ENCODE measurements at regions of chr15 and their contacts with region 1.

Region 1: GRCh38 chr15:68550481-68551295 is 28.1 kb upstream of the CORO2B start:
- DNase-seq: peak; percentile 48
- ATAC-seq: peak; percentile 81
- H3K4me3 ChIP-seq: no peak overlapping the region
- H3K27ac ChIP-seq: no peak overlapping the region
- H3K4me1 ChIP-seq: no peaks in the 10 kb centered on the region
- H3K27me3 ChIP-seq: peaks cover 11% of the 10 kb centered on the region
- CTCF ChIP-seq: peak; percentile 83 to 90 (median 89)
- POLR2A ChIP-seq: no peak
- RAD21 ChIP-seq: peak; percentile 84

Region 2: GRCh38 chr15:68304589-68305337 is 245.9 kb before region 1 on chr15:
- CTCF ChIA-PET with region 1: interaction called, 38 read pairs
- POLR2A ChIA-PET with region 1: no interaction called
- RAD21 ChIA-PET with region 1: interaction called in 1 of 2 experiments, 3 read pairs
- intact Hi-C with region 1: loop called (anchors 2 kb)
- DNase-seq: no peak
- ATAC-seq: no peak
- H3K4me3 ChIP-seq: no peak overlapping the region
- H3K27ac ChIP-seq: no peak overlapping the region
- H3K4me1 ChIP-seq: peaks cover 0 to 33% of the 10 kb centered on the region in 2 experiments; a peak in 3 of 4 replicates
- H3K27me3 ChIP-seq: no peaks in the 10 kb centered on the region
- CTCF ChIP-seq: no peak
- POLR2A ChIP-seq: no peak
- RAD21 ChIP-seq: no peak

Region 3: DNA sequence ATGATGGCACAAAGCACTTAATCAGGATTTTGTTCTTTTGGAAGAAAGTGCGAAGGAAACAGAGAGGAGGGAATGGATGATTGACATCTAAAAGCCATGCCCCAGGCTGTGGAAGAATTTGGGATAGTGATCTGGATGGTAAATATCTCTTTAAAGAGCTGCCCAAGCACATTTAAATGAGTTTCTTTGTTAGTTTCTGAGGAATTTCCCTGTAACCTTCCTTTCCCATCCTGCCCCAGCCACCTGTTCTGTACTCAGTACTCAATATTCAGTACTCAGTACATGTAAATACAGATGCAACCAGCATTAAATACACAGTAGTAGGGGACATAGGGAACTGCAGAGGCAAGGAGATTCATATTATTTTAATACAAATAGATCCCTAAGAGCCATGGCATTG is 20.3 kb after region 1 on chr15:
- CTCF ChIA-PET with region 1: no interaction called
- POLR2A ChIA-PET with region 1: no interaction called
- RAD21 ChIA-PET with region 1: no interaction called
- intact Hi-C with region 1: no loop called
- DNase-seq: no peak
- ATAC-seq: no peak
- H3K4me3 ChIP-seq: no peak overlapping the region
- H3K27ac ChIP-seq: no peak overlapping the region
- H3K4me1 ChIP-seq: no peaks in the 10 kb centered on the region
- H3K27me3 ChIP-seq: no peaks in the 10 kb centered on the region
- CTCF ChIP-seq: no peak
- POLR2A ChIP-seq: no peak
- RAD21 ChIP-seq: no peak

Region 4: GRCh38 chr15:68672781-68673205 is 122.1 kb after region 1 on chr15:
- CTCF ChIA-PET with region 1: interaction called, 98 read pairs
- POLR2A ChIA-PET with region 1: no interaction called
- RAD21 ChIA-PET with region 1: interaction called, 23 to 28 read pairs
- intact Hi-C with region 1: loop called (anchors 1 kb)
- DNase-seq: no peak
- ATAC-seq: no peak
- H3K4me3 ChIP-seq: no peak overlapping the region
- H3K27ac ChIP-seq: no peak overlapping the region
- H3K4me1 ChIP-seq: peaks cover 0 to 18% of the 10 kb centered on the region in 2 experiments; a peak in 2 of 4 replicates
- H3K27me3 ChIP-seq: no peaks in the 10 kb centered on the region
- CTCF ChIP-seq: peak in 2 of 3 experiments; percentile 21 to 27; a peak in 2 of 6 replicates
- POLR2A ChIP-seq: no peak
- RAD21 ChIP-seq: peak; percentile 52

Region 5: GRCh38 chr15:68875377-68876116 is 324.9 kb after region 1 on chr15:
- CTCF ChIA-PET with region 1: interaction called, 45 read pairs
- POLR2A ChIA-PET with region 1: no interaction called
- RAD21 ChIA-PET with region 1: interaction called in 1 of 2 experiments, 7 read pairs
- intact Hi-C with region 1: loop called (anchors 1 kb)
- DNase-seq: peak; percentile 88
- ATAC-seq: peak; percentile 89
- H3K4me3 ChIP-seq: peak overlapping the region; percentile 26 to 48
- H3K27ac ChIP-seq: no peak overlapping the region
- H3K4me1 ChIP-seq: peaks cover 0 to 9% of the 10 kb centered on the region in 2 experiments; a peak in 1 of 4 replicates
- H3K27me3 ChIP-seq: no peaks in the 10 kb centered on the region
- CTCF ChIP-seq: peak; percentile 83 to 88 (median 87)
- POLR2A ChIP-seq: no peak
- RAD21 ChIP-seq: peak; percentile 95

Measured in HCT116 (cell line).